HCT116 (cell line): ENCODE measurements at regions of chr19 and their contacts with region 1.

Region 1: DNA sequence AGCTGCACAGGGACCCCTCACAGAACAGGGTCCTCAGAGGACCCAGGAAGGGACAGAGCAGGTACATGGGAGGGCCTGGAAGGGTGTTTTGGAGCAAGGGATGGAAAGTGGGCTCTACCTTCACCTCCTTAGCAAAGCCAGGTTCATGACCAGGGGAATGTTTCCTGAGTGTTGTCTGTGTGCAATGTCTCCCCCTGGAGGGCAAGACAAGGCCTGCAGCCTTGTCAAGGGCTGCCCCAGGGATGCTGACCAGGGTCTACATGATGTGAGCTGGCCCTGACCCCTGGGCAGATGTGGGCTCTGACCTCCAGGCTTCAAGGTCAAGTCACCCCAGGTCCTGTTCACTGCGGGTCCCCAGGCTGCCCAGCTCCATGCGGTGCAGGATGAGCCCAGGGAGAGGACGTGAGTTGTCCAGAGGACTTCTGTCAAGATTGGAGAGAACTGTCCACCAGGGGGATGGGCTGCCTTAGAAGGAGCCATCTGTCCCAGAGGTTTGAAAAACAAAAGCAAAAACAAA is 1.0 kb upstream of the CEACAM1 start:
- DNase-seq: peak; percentile 31
- ATAC-seq: peak; percentile 93
- H3K4me3 ChIP-seq: no peak overlapping the region
- H3K27ac ChIP-seq: no peak overlapping the region; the same call in 1 of the 2 replicates
- H3K4me1 ChIP-seq: peaks cover 6 to 19% of the 10 kb centered on the region in 2 experiments; a peak in 2 of 4 replicates
- H3K27me3 ChIP-seq: no peaks in the 10 kb centered on the region
- CTCF ChIP-seq: peak; percentile 91 to 97 (median 95)
- POLR2A ChIP-seq: no peak
- RAD21 ChIP-seq: peak; percentile 92

Region 2: GRCh38 chr19:42075616-42076379 is 453.5 kb before region 1 on chr19 and contains the start of gene ZNF574:
- CTCF ChIA-PET with region 1: no interaction called
- POLR2A ChIA-PET with region 1: no interaction called
- RAD21 ChIA-PET with region 1: no interaction called
- intact Hi-C with region 1: loop called (anchors 10 kb)
- DNase-seq: peak; percentile 99
- ATAC-seq: peak; percentile 96
- H3K4me3 ChIP-seq: peak within 1 kb of the TSS; percentile 91 to 97
- H3K27ac ChIP-seq: peak within 1 kb of the TSS; percentile 90
- H3K4me1 ChIP-seq: peaks cover 11 to 36% of the 10 kb centered on the region in 2 experiments
- H3K27me3 ChIP-seq: no peaks in the 10 kb centered on the region
- CTCF ChIP-seq: no peak
- POLR2A ChIP-seq: peak; percentile 79
- RAD21 ChIP-seq: no peak
- total RNA-seq, gene ZNF574: 24.6 TPM

Region 3: DNA sequence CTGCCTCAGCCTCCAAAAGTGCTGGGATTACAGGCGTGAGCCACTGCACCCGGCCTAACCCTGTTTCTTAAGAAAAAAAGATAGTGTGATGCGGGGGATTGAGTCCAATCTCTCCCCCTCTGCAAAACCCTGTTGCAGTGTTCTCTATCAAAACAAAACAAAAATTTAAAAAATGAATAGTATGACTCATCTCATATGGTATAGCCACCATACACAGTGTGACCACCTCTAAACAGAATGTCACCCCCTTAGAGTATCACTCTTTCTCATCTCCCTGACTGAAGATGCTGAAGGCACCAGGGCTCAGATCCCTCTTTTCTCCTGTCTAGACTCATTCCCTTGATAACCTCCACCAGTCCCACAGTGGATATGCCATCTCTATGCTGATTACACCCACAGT is 267.5 kb before region 1 on chr19:
- CTCF ChIA-PET with region 1: no interaction called
- POLR2A ChIA-PET with region 1: no interaction called
- RAD21 ChIA-PET with region 1: no interaction called
- intact Hi-C with region 1: no loop called
- DNase-seq: no peak
- ATAC-seq: no peak
- H3K4me3 ChIP-seq: no peak overlapping the region
- H3K27ac ChIP-seq: no peak overlapping the region
- H3K4me1 ChIP-seq: peaks cover 23 to 26% of the 10 kb centered on the region in 2 experiments
- H3K27me3 ChIP-seq: no peaks in the 10 kb centered on the region
- CTCF ChIP-seq: no peak
- POLR2A ChIP-seq: no peak
- RAD21 ChIP-seq: no peak

Region 4: DNA sequence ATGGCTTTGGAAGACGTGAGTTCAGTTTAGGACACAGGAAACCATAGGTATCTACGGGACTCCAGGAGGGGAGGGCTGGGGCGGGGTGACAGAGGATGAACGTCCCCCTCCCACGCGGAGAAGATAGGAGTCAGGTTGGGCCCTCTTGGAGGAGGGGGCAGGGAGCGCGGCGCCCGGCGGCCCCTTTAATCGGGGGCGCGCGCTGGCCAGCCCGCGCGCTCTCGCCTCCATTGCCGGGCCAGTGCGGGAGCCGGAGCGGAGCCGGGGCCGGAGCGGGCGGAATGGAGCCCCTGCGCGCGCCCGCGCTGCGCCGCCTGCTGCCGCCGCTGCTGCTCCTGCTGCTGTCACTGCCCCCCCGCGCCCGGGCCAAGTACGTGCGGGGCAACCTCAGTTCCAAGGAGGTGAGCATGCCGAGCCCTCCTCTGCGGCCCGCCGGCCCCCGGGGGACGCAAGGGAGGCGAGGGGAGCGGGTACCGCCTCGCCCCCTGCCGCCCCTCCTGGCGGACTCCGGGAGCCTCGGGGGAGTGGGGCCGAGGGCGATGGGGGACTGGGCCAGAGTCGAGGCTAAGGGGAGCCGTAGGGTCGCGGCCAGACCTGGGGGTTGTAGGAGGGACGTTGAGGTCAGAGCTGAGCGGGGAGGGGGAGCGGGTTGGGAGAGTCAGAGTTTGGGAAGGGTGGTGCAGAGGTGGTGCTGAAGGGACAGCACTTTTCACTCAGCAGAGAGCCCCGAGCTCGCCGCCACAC is 216.0 kb before region 1 on chr19 and contains the start of gene TMEM145:
- CTCF ChIA-PET with region 1: no interaction called
- POLR2A ChIA-PET with region 1: no interaction called
- RAD21 ChIA-PET with region 1: no interaction called
- intact Hi-C with region 1: no loop called
- DNase-seq: no peak
- ATAC-seq: peak; percentile 91
- H3K4me3 ChIP-seq: peak within 1 kb of the TSS; percentile 57 to 79
- H3K27ac ChIP-seq: peak within 1 kb of the TSS; percentile 10; the same call in 1 of the 2 replicates
- H3K4me1 ChIP-seq: peaks cover 0 to 18% of the 10 kb centered on the region in 2 experiments; a peak in 2 of 4 replicates
- H3K27me3 ChIP-seq: no peaks in the 10 kb centered on the region
- CTCF ChIP-seq: peak in 1 of 3 experiments; percentile 14; a peak in 1 of 6 replicates
- POLR2A ChIP-seq: no peak
- RAD21 ChIP-seq: no peak
- total RNA-seq, gene TMEM145: 7.2 TPM

Region 5: DNA sequence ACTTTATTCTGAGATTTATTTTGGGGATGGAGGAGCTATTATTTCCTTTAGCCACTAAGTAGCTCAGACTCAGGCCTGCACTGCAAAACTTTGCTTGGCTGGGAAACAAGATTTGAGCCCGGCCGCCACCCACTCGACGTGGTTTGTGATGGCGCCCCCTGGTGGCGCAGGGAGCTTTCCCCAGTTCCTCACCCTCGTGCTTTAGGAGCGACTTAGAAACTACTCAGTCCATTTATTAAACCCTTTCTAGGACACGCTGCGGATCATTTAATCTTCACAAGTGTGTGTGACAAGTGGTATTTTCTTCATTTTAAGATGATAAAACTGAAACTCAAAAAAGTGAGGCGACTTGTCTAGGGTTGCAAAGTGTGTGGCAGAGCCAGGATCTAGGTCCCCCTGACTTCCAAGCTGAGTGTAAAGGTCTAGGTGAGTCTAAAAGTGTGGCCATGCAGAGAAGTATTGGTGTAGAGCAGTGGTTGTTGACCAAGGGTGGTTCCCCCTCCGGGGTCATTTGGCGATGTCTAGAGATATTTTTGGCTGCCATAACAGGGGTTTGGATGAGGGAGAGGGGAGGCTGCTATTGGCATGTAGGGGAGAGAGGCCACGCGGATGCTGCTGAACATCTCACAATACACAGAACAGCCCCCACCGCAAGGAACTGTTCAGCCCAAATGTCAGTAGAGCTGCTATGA is 88.8 kb before region 1 on chr19:
- CTCF ChIA-PET with region 1: interaction called, 14 read pairs
- POLR2A ChIA-PET with region 1: no interaction called
- RAD21 ChIA-PET with region 1: interaction called in 1 of 2 experiments, 3 read pairs
- intact Hi-C with region 1: no loop called
- DNase-seq: peak; percentile 42
- ATAC-seq: peak; percentile 78
- H3K4me3 ChIP-seq: no peak overlapping the region
- H3K27ac ChIP-seq: no peak overlapping the region
- H3K4me1 ChIP-seq: peaks cover 0 to 10% of the 10 kb centered on the region in 2 experiments; a peak in 2 of 4 replicates
- H3K27me3 ChIP-seq: no peaks in the 10 kb centered on the region
- CTCF ChIP-seq: peak; percentile 79 to 99 (median 95); a peak in 5 of 6 replicates
- POLR2A ChIP-seq: no peak
- RAD21 ChIP-seq: peak; percentile 49

Region 6: GRCh38 chr19:42450314-42450934 is 78.9 kb before region 1 on chr19:
- CTCF ChIA-PET with region 1: interaction called, 30 read pairs
- POLR2A ChIA-PET with region 1: interaction called, 3 read pairs
- RAD21 ChIA-PET with region 1: interaction called, 3 to 5 read pairs
- intact Hi-C with region 1: loop called (anchors 1 kb)
- DNase-seq: peak; percentile 85
- ATAC-seq: peak; percentile 92
- H3K4me3 ChIP-seq: no peak overlapping the region
- H3K27ac ChIP-seq: no peak overlapping the region
- H3K4me1 ChIP-seq: peaks cover 6 to 16% of the 10 kb centered on the region in 2 experiments; a peak in 3 of 4 replicates
- H3K27me3 ChIP-seq: no peaks in the 10 kb centered on the region
- CTCF ChIP-seq: peak; percentile 82 to 95 (median 93)
- POLR2A ChIP-seq: no peak
- RAD21 ChIP-seq: peak; percentile 98

Region 7: GRCh38 chr19:42471554-42472249 is 57.6 kb before region 1 on chr19:
- CTCF ChIA-PET with region 1: interaction called, 10 read pairs
- POLR2A ChIA-PET with region 1: no interaction called
- RAD21 ChIA-PET with region 1: no interaction called
- intact Hi-C with region 1: no loop called
- DNase-seq: no peak
- ATAC-seq: peak; percentile 51
- H3K4me3 ChIP-seq: no peak overlapping the region
- H3K27ac ChIP-seq: no peak overlapping the region
- H3K4me1 ChIP-seq: peaks cover 36 to 51% of the 10 kb centered on the region in 2 experiments
- H3K27me3 ChIP-seq: no peaks in the 10 kb centered on the region
- CTCF ChIP-seq: no peak
- POLR2A ChIP-seq: no peak
- RAD21 ChIP-seq: no peak

Region 8: GRCh38 chr19:42487032-42487797 is 42.1 kb before region 1 on chr19:
- CTCF ChIA-PET with region 1: no interaction called
- POLR2A ChIA-PET with region 1: no interaction called
- RAD21 ChIA-PET with region 1: no interaction called
- intact Hi-C with region 1: loop called (anchors 2 kb)
- DNase-seq: no peak
- ATAC-seq: no peak
- H3K4me3 ChIP-seq: no peak overlapping the region
- H3K27ac ChIP-seq: no peak overlapping the region
- H3K4me1 ChIP-seq: peaks cover 3 to 10% of the 10 kb centered on the region in 2 experiments; a peak in 2 of 4 replicates
- H3K27me3 ChIP-seq: no peaks in the 10 kb centered on the region
- CTCF ChIP-seq: no peak
- POLR2A ChIP-seq: no peak
- RAD21 ChIP-seq: no peak

Region 9: DNA sequence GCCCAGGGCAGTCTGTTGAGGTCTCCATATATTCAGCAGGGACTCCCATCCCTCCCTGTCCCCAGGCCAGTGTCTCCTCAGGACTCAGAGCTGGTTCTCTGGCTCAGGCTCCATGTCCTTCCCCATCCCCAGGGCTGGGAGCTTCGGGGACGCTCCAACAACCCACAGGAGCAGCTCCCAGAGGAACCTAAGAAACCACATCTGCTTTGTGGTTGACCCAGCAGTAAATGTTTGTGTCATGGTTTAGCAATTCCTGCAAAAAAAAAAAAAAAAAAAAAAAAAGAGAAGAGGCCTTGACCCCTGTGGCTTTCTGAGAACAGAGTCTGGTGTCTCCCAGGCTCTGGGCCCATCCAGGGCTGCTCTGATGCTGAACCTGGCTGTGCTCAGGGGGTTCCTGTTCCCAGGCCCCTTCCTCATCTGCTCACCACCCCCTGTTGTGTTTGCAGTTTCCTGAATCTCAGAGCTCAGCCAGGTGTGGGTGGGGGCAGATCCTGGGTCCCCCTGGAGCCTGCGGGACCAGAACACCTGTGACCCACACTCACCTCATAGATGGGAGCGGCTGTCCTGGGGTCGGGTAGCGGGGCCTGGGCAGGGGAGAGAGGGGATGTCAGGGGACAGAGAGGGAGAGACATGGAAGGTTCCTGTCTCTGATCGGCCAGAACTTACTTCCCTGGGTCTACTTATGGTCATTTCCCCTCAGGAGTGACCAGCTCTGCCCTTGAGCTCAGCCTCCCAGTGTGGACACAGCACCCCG is 24.2 kb after region 1 on chr19:
- CTCF ChIA-PET with region 1: no interaction called
- POLR2A ChIA-PET with region 1: no interaction called
- RAD21 ChIA-PET with region 1: no interaction called
- intact Hi-C with region 1: no loop called
- DNase-seq: no peak
- ATAC-seq: peak; percentile 42; the same call in 1 of the 2 replicates
- H3K4me3 ChIP-seq: no peak overlapping the region
- H3K27ac ChIP-seq: no peak overlapping the region
- H3K4me1 ChIP-seq: no peaks in the 10 kb centered on the region
- H3K27me3 ChIP-seq: no peaks in the 10 kb centered on the region
- CTCF ChIP-seq: no peak
- POLR2A ChIP-seq: no peak
- RAD21 ChIP-seq: no peak